Gastrocnemius medialis (tissue), 4 donors: ENCODE measurements at regions of chr10 and their contacts with region 1.

Region 1: GRCh38 chr10:24331457-24331856 is 122.5 kb downstream of the KIAA1217 start:
- DNase-seq: peak; percentile 39 to 75
- ATAC-seq: peak; percentile 63 to 80
- H3K4me3 ChIP-seq: peak overlapping the region in 1 of 4 donors; percentile 7
- H3K27ac ChIP-seq: peak overlapping the region; percentile 28 to 70 (median 54)
- H3K4me1 ChIP-seq: peaks cover 40 to 43% of the 10 kb centered on the region in 2 donors
- H3K27me3 ChIP-seq: no peaks in the 10 kb centered on the region
- CTCF ChIP-seq: no peak
- POLR2A ChIP-seq: no peak

Region 2: DNA sequence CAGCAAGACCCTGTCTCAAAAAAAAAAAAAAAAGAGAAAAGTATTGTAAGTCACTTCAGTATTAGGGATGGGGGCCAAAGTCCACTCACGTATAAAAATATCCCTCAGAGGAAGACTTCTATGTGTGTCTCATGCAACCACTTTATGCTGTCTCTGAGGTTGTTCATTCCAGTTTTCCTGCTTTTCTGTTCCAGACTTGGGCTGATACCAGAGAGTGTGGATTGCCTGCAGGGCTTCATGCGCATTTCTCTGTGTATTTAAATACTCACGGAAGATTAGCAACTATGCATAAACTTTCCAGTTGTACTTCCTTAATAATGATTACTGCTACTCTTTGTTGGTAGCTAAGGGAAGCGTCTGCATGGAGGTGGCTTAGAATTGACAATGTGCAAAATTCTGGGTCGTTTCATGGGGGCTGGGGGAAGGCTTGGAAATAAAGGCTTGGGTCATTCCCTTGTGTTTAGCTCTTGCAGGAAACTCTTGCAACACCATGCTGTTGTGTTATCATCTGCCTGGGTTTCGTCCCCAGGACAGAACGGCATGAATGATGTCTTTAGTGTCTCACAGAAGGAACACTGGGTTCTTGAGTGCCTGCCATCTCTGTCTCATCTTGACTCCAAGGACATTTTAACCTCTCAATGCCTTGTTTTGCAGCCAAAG is 68.4 kb before region 1 on chr10:
- in situ Hi-C with region 1: no loop called
- intact Hi-C with region 1: no loop called
- DNase-seq: peak; percentile 96
- ATAC-seq: peak; percentile 88 to 89
- H3K4me3 ChIP-seq: peak overlapping the region; percentile 2 to 33 (median 24)
- H3K27ac ChIP-seq: peak overlapping the region; percentile 94 to 98 (median 96)
- H3K4me1 ChIP-seq: peaks cover 72 to 83% of the 10 kb centered on the region in 2 donors
- H3K27me3 ChIP-seq: no peaks in the 10 kb centered on the region
- CTCF ChIP-seq: no peak
- POLR2A ChIP-seq: peak in 1 of 2 donors; percentile 15

Region 3: DNA sequence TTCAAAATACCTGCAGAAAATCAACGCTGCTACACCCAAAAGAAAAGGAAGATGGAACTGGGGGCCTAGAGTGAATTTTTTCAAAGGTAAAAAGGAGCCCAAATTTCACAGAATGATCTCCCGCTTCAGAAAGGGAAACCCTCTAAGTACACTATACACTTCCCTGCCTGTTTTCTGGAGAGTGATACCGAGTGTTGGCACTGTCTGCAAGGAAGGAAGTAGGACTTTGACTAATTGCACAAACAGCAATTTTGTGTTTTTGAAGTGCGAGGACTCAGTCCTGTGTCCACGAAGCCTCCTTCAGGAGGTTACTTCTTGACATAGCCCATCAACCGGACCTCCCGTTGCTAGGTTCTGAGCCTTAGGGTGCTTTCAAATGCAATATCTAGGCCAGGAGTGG is 16.2 kb before region 1 on chr10:
- in situ Hi-C with region 1: no loop called
- intact Hi-C with region 1: loop called (anchors 2 kb)
- DNase-seq: no peak
- ATAC-seq: no peak
- H3K4me3 ChIP-seq: no peak overlapping the region
- H3K27ac ChIP-seq: no peak overlapping the region
- H3K4me1 ChIP-seq: peaks cover 27 to 29% of the 10 kb centered on the region in 2 donors
- H3K27me3 ChIP-seq: no peaks in the 10 kb centered on the region
- CTCF ChIP-seq: no peak
- POLR2A ChIP-seq: no peak

Region 4: GRCh38 chr10:24444337-24444736 is 112.9 kb after region 1 on chr10:
- in situ Hi-C with region 1: no loop called
- intact Hi-C with region 1: no loop called
- DNase-seq: no peak
- ATAC-seq: peak; percentile 26 to 77
- H3K4me3 ChIP-seq: no peak overlapping the region
- H3K27ac ChIP-seq: peak overlapping the region; percentile 58 to 78 (median 68)
- H3K4me1 ChIP-seq: peaks cover 35 to 44% of the 10 kb centered on the region in 2 donors
- H3K27me3 ChIP-seq: no peaks in the 10 kb centered on the region
- CTCF ChIP-seq: no peak
- POLR2A ChIP-seq: no peak